GM12878 (cell line): ENCODE measurements at regions of chr15 and their contacts with region 1.

Region 1: DNA sequence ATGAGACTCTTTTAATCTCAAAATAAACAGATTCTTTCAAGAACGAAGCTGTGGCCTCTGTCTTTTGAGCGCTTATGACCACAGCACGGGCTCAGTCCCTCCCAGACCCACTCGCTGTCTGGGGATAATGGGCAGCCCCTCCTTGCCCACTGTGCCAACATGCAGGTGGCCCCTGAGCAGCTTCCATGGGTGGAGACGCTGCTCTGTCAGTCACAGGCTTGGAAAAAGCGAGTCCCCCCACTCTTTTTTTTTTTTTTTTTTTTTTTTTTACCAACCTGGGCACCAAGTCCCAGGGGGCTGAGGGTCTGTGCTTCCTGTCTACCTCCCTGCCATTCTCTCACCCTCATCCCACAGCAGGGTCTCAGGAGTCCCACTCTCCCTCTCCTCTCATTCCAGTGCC is 150.9 kb downstream of the LRRK1 start:
- DNase-seq: no peak
- ATAC-seq: no peak
- H3K4me3 ChIP-seq: no peak overlapping the region
- H3K27ac ChIP-seq: no peak overlapping the region
- H3K4me1 ChIP-seq: no peaks in the 10 kb centered on the region
- H3K27me3 ChIP-seq: no peaks in the 10 kb centered on the region
- CTCF ChIP-seq: no peak
- EP300 ChIP-seq: no peak
- POLR2A ChIP-seq: no peak
- RAD21 ChIP-seq: no peak

Region 2: DNA sequence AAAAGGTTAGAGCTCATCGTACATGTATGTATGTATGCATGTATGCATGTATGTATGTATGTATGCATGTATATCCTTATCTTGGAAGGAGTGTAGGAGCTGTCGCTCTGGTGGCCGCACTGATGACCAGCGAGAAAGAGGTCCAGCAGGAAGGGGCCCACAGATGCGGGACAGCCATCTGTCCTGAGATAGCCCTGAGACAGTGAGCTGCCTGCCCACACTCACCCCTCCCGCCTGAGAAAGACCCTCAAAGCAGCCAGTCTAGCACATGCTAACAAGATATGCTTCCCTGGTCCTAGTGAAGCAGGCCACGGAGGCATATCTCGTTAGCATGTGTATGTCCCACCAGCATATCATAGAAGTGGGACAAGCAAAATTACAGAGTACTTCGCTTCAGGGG is 12.4 kb after region 1 on chr15:
- CTCF ChIA-PET with region 1: interaction called, 3 read pairs
- POLR2A ChIA-PET with region 1: interaction called, 11 read pairs
- RAD21 ChIA-PET with region 1: no interaction called
- SMC1A ChIA-PET with region 1: no interaction called
- in situ Hi-C with region 1: no loop called
- intact Hi-C with region 1: no loop called
- DNase-seq: no peak
- ATAC-seq: no peak
- H3K4me3 ChIP-seq: no peak overlapping the region
- H3K27ac ChIP-seq: no peak overlapping the region
- H3K4me1 ChIP-seq: no peaks in the 10 kb centered on the region
- H3K27me3 ChIP-seq: no peaks in the 10 kb centered on the region
- CTCF ChIP-seq: no peak
- EP300 ChIP-seq: no peak
- POLR2A ChIP-seq: no peak
- RAD21 ChIP-seq: no peak

Region 3: DNA sequence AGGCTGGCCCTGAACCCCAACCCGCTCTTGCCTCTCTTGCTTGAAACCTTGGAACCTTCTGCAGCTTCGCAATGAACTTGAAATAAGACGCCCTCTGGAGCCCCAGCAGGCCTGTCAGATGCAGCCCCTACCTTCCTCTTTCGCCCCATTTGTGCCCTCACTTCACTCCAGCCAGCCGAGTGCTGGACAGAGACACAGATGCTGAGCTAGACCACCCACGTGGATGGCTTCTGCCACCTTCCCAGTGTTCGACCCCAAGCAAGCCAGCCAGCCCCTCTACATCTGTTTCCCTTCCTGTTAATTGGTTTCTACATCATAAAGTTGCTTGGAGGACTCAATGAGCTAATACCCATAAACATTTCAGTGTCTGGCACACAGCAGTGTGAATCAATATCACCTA is 248.8 kb after region 1 on chr15:
- CTCF ChIA-PET with region 1: no interaction called
- POLR2A ChIA-PET with region 1: no interaction called
- RAD21 ChIA-PET with region 1: no interaction called
- SMC1A ChIA-PET with region 1: no interaction called
- in situ Hi-C with region 1: no loop called
- intact Hi-C with region 1: no loop called
- DNase-seq: no peak
- ATAC-seq: no peak
- H3K4me3 ChIP-seq: no peak overlapping the region
- H3K27ac ChIP-seq: no peak overlapping the region
- H3K4me1 ChIP-seq: no peaks in the 10 kb centered on the region
- H3K27me3 ChIP-seq: peaks cover 4 to 6% of the 10 kb centered on the region in 2 experiments
- CTCF ChIP-seq: no peak
- EP300 ChIP-seq: no peak
- POLR2A ChIP-seq: no peak
- RAD21 ChIP-seq: no peak